ENCODE measurements at regions of chr3 and their contacts with region 1.

Region 1: GRCh38 chr3:50298836-50299637 is at the starts of genes HYAL3 and NAA80:
- DNase-seq: peak; percentile 97 to 100 (median 99)
- ATAC-seq: peak; percentile 84 to 91 (median 90)
- H3K4me3 ChIP-seq: peak within 1 kb of the TSS; percentile 75 to 92
- H3K4me3 Mint-ChIP-seq: peak within 1 kb of the TSS; percentile 95 to 97 (median 96)
- H3K27ac ChIP-seq: peak within 1 kb of the TSS; percentile 95
- H3K27ac Mint-ChIP-seq: peak within 1 kb of the TSS; percentile 98 to 100
- H3K4me1 ChIP-seq: peaks cover 9 to 38% of the 10 kb centered on the region in 2 experiments
- H3K4me1 Mint-ChIP-seq: peaks cover 25 to 33% (median 33%) of the 10 kb centered on the region in 3 donors
- H3K27me3 ChIP-seq: no peaks in the 10 kb centered on the region
- H3K27me3 Mint-ChIP-seq: no peaks in the 10 kb centered on the region
- total RNA-seq, gene HYAL3: 2.6 to 6.2 (median 3.9) TPM
- total RNA-seq, gene NAA80: 33.8 to 45.7 (median 43.9) TPM

Region 2: GRCh38 chr3:50321336-50322114 is 22.5 kb after region 1 on chr3:
- CTCF ChIA-PET with region 1: interaction called in 1 of 2 experiments, 8 read pairs
- POLR2A ChIA-PET with region 1: interaction called in 1 of 2 experiments, 13 read pairs
- DNase-seq: peak; percentile 59 to 85 (median 75)
- ATAC-seq: peak; percentile 77 to 84 (median 80)
- H3K4me3 ChIP-seq: peak overlapping the region; percentile 80 to 84
- H3K4me3 Mint-ChIP-seq: peak overlapping the region; percentile 80 to 86 (median 80)
- H3K27ac ChIP-seq: peak overlapping the region; percentile 90
- H3K27ac Mint-ChIP-seq: peak overlapping the region; percentile 91 to 96
- H3K4me1 ChIP-seq: peaks cover 6 to 67% of the 10 kb centered on the region in 2 experiments
- H3K4me1 Mint-ChIP-seq: peaks cover 28 to 57% (median 38%) of the 10 kb centered on the region in 3 donors
- H3K27me3 ChIP-seq: no peaks in the 10 kb centered on the region
- H3K27me3 Mint-ChIP-seq: no peaks in the 10 kb centered on the region

Measured in T-cell (primary cell).